Ascending aorta (tissue), 2 donors: ENCODE measurements at regions of chr22 and their contacts with region 1.

Region 1: GRCh38 chr22:29503811-29504372 is 23.9 kb downstream of the NEFH start:
- DNase-seq: no peak
- H3K4me3 ChIP-seq: no peak overlapping the region
- H3K27ac ChIP-seq: no peak overlapping the region
- H3K4me1 ChIP-seq: no peaks in the 10 kb centered on the region
- H3K27me3 ChIP-seq: no peaks in the 10 kb centered on the region
- CTCF ChIP-seq: no peak

Region 2: GRCh38 chr22:29394931-29395581 is 108.8 kb before region 1 on chr22:
- intact Hi-C with region 1: loop called (anchors 10 kb)
- DNase-seq: peak in 1 of 2 donors; percentile 77
- H3K4me3 ChIP-seq: no peak overlapping the region
- H3K27ac ChIP-seq: no peak overlapping the region
- H3K4me1 ChIP-seq: no peaks in the 10 kb centered on the region
- H3K27me3 ChIP-seq: no peaks in the 10 kb centered on the region
- CTCF ChIP-seq: peak; percentile 69 to 82 (median 71)